RWPE1 (cell line): ENCODE measurements at regions of chr7 and their contacts with region 1.

Region 1: GRCh38 chr7:74388880-74389415 is 64.8 kb upstream of the GTF2IRD1 start:
- DNase-seq: no peak
- H3K27ac ChIP-seq: no peak overlapping the region
- CTCF ChIP-seq: no peak

Region 2: DNA sequence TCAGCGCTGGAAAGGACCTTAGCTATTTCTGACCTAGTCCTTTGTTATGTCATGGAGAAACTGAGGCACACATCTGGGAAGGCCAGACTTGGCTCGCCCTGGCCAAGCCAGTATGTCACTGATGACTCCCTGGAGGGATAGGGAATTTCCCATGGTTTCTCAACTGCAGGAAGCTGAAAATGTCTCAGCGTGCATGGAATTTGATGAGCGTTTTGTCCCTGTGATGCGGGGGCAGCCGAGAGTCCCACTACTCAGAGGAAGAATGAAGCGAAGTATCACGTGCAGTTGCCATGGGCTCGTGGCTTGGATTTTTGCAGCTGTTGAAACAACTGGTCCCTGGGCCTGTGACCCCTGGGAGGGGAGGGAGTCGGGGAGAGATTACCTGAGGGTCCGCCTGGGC is 54.9 kb before region 1 on chr7:
- CTCF ChIA-PET with region 1: no interaction called
- POLR2A ChIA-PET with region 1: no interaction called
- DNase-seq: no peak
- H3K27ac ChIP-seq: peak overlapping the region; percentile 41
- CTCF ChIP-seq: no peak

Region 3: GRCh38 chr7:74401137-74401859 is 12.3 kb after region 1 on chr7:
- CTCF ChIA-PET with region 1: interaction called, 12 read pairs
- POLR2A ChIA-PET with region 1: no interaction called
- DNase-seq: peak; percentile 60
- H3K27ac ChIP-seq: peak overlapping the region; percentile 40
- CTCF ChIP-seq: peak; percentile 99